Sciatic nerve (tissue), 2 donors: ENCODE measurements at regions of chr11 and their contacts with region 1.

Region 1: GRCh38 chr11:2196970-2197770 is 25.6 kb upstream of the TH start:
- DNase-seq: peak; percentile 88
- ATAC-seq: peak; percentile 86

Region 2: DNA sequence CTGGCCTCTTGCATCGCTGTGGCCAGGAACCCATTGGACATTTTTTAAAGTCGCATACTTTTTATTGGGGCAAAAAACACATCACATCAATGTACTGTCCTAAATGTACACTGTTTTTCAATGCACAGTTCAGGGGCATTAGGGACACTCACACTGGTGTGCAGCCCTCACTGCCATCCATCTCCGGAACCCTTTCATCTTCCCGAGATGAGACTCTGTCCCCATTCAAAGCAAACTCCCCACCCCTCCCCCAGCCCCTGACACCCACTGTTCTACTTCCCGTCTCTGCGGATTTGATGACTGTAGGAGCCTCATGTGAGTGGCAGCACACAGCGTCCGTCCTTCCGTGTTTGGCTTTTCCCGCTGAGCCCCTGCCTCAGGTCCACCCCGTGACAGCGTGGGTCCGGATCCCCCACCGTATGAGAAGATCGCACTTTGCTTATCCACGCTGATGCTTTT is 16.2 kb after region 1 on chr11:
- intact Hi-C with region 1: no loop called
- DNase-seq: peak; percentile 58
- ATAC-seq: no peak

Region 3: DNA sequence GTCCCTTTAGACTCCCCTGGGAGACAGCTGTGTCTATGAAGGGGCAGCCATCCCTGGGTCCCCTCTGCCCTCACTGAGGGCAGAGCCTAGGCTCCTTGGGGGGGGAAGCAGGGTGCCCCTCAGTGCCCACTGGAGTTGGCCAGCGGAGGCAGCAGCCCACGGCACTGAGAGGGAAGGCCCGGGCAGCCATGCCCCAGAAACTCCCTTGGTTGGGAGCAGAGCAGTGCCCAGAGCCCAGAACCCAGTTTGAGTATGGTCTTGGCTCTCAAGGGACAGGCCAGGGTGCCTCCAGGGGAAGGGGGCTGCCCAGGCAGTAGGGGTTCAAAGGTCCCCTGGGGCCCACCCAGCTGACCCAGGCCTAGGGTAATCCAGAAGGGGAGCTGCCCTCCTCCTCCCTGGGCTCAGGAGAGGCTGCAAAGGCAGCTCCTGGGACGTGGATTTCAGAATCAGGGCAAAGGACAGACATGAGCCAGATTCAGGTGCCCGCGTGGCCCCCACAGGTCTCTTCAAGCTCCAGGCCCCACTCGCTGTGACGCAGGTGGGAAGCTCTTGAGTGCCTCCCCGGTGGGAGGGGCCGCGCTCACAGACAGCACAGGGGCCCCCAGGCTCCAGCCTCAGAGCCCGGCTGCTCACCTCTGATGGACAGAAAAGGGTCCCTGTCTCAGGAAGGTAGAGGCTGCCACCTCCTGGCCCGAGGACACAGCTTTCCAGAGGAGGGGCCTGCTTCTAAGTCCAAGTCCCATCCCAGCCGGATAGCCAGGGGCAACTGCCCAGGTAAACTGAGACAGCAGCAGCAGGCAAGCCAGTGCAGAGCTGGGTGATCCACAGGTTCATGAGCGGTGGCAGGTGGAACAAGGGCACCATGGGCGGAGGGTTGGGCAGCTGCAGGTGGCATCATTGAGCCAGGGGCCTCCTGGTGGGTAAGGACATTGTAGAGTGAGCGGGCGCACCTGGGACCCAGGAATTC is 101.9 kb after region 1 on chr11:
- intact Hi-C with region 1: loop called (anchors 5 kb)
- DNase-seq: peak; percentile 61
- ATAC-seq: no peak

Region 4: GRCh38 chr11:2420502-2421225 is 223.5 kb after region 1 on chr11:
- intact Hi-C with region 1: loop called (anchors 5 kb)
- DNase-seq: peak; percentile 87
- ATAC-seq: peak; percentile 96

Region 5: GRCh38 chr11:2901854-2902783 is 704.9 kb after region 1 on chr11:
- intact Hi-C with region 1: loop called (anchors 10 kb)
- DNase-seq: peak; percentile 96
- ATAC-seq: peak; percentile 91